IMR-90 (cell line): ENCODE measurements at regions of chr1 and their contacts with region 1.

Region 1: DNA sequence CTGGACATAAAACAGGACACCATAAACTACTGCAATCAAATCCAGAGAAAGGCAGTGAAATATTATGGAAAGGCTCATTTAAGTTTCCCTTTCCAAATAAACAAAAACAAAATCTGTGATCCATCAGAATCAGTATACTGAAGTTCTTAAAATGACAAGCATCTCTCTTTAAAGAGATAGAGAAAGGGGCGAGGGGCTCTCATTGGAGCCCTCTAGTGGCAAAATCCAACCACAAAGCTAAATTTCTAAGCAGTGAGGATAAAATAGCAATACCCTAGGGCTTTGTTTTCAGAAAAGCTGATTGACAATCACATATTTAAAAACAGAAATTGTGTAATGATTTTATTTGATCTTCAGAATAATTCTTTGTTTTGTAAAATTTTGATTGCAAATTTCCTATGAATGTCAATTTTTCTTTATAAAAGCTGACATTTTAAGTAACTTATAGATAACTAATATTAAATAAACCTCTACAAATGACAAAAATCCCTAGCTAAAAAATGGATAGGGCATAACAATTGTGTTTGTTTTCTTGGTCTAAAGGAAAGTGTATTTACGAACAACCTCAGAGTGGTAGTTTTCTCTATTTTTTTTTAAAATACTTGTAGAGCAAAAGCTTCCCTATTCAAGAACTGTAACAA is 138.2 kb downstream of the COL24A1 start:
- DNase-seq: peak; percentile 23
- ATAC-seq: peak; percentile 67; the same call in 1 of the 2 replicates
- H3K4me3 ChIP-seq: no peak overlapping the region
- H3K27ac ChIP-seq: no peak overlapping the region
- H3K4me1 ChIP-seq: no peaks in the 10 kb centered on the region
- H3K27me3 ChIP-seq: no peaks in the 10 kb centered on the region
- CTCF ChIP-seq: peak; percentile 68
- POLR2A ChIP-seq: no peak
- RAD21 ChIP-seq: peak; percentile 62

Region 2: DNA sequence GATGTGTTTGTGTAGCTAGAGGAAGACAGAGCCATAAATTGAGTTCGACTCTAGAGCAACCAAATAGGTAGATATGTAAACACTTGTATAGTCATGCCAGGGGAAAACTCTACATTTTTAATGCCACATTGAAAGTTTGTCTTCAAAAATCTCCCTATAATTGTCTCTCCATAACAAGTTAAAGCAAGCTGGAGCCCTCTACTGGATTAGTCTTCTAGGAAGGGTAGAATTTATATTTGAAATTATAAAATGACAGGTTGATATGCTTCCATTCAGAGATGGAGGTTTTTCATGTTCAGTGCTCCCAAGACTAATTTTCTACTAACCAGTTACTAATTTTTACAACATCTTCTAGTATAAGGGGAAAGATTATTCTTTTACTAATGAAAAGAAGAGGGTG is 151.2 kb after region 1 on chr1:
- CTCF ChIA-PET with region 1: interaction called, 3 read pairs
- POLR2A ChIA-PET with region 1: no interaction called
- dilution Hi-C with region 1: no loop called
- in situ Hi-C with region 1: no loop called
- intact Hi-C with region 1: loop called (anchors 5 kb)
- DNase-seq: peak; percentile 36
- ATAC-seq: peak; percentile 76
- H3K4me3 ChIP-seq: no peak overlapping the region
- H3K27ac ChIP-seq: no peak overlapping the region
- H3K4me1 ChIP-seq: no peaks in the 10 kb centered on the region
- H3K27me3 ChIP-seq: no peaks in the 10 kb centered on the region
- CTCF ChIP-seq: peak; percentile 56
- POLR2A ChIP-seq: no peak
- RAD21 ChIP-seq: peak; percentile 55